Heart right ventricle (tissue), 16 donors: ENCODE measurements at regions of chr12 and their contacts with region 1.

Region 1: GRCh38 chr12:18250313-18250916 is 10.9 kb upstream of the PIK3C2G start:
- DNase-seq: peak in 1 of 2 donors; percentile 28
- ATAC-seq: no peak
- H3K4me3 ChIP-seq: no peak overlapping the region
- H3K27ac ChIP-seq: no peak overlapping the region
- H3K4me1 ChIP-seq: no peaks in the 10 kb centered on the region
- H3K27me3 ChIP-seq: no peaks in the 10 kb centered on the region
- CTCF ChIP-seq: peak; percentile 40 to 82 (median 73)

Region 2: GRCh38 chr12:18101043-18101442 is 149.4 kb before region 1 on chr12:
- intact Hi-C with region 1: no loop called
- DNase-seq: no peak
- ATAC-seq: no peak
- H3K4me3 ChIP-seq: no peak overlapping the region
- H3K27ac ChIP-seq: no peak overlapping the region
- H3K4me1 ChIP-seq: no peaks in the 10 kb centered on the region
- H3K27me3 ChIP-seq: no peaks in the 10 kb centered on the region
- CTCF ChIP-seq: no peak

Region 3: GRCh38 chr12:18313306-18313705 is 62.9 kb after region 1 on chr12:
- intact Hi-C with region 1: loop called in 2 of 10 experiments (anchors 10 kb)
- DNase-seq: no peak
- ATAC-seq: no peak
- H3K4me3 ChIP-seq: no peak overlapping the region
- H3K27ac ChIP-seq: no peak overlapping the region
- H3K4me1 ChIP-seq: no peaks in the 10 kb centered on the region
- H3K27me3 ChIP-seq: no peaks in the 10 kb centered on the region
- CTCF ChIP-seq: no peak

Region 4: DNA sequence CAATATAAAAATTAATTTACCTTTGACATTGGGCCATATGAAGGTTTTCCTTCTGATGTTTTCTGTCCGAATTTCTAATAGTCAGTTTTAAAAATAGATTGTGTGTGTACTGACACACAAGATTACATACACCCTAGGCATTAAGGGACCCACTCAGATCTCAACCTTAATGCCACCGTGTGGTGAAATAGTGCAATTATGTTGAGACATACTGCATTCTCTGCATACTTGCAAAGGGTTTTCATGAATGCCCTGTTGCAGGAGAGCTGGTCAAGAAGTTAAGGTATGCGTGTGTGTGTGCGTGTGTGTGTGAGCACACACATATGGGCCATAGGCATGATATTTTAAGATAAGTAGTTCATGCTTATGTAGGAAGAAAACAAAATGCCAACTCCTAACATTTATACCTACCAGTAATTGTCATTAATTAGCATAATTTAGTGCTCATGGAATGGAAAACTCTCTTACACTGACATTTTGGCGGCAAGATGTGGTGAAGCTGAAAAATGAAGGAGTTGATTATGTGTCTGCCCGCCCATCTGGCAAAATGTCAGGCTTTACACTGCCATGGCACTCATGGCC is 69.7 kb after region 1 on chr12:
- intact Hi-C with region 1: loop called in 3 of 10 experiments (anchors 2 to 10 kb)
- DNase-seq: no peak
- ATAC-seq: peak in 7 of 8 donors; percentile 45 to 77 (median 69)
- H3K4me3 ChIP-seq: no peak overlapping the region
- H3K27ac ChIP-seq: no peak overlapping the region
- H3K4me1 ChIP-seq: peaks cover 0 to 6% (median 0%) of the 10 kb centered on the region in 9 donors
- H3K27me3 ChIP-seq: no peaks in the 10 kb centered on the region
- CTCF ChIP-seq: peak; percentile 17 to 53 (median 45)